WTC11 (cell line): ENCODE measurements at regions of chr3 and their contacts with region 1.

Region 1: GRCh38 chr3:192840143-192840836 is 77.4 kb downstream of the MB21D2 start:
- DNase-seq: no peak
- ATAC-seq: no peak
- H3K4me3 Mint-ChIP-seq: no peak overlapping the region
- H3K27ac Mint-ChIP-seq: no peak overlapping the region; the same call in 1 of the 2 replicates
- H3K4me1 Mint-ChIP-seq: peaks cover 73% of the 10 kb centered on the region
- H3K27me3 Mint-ChIP-seq: no peaks in the 10 kb centered on the region
- CTCF ChIP-seq: no peak

Region 2: DNA sequence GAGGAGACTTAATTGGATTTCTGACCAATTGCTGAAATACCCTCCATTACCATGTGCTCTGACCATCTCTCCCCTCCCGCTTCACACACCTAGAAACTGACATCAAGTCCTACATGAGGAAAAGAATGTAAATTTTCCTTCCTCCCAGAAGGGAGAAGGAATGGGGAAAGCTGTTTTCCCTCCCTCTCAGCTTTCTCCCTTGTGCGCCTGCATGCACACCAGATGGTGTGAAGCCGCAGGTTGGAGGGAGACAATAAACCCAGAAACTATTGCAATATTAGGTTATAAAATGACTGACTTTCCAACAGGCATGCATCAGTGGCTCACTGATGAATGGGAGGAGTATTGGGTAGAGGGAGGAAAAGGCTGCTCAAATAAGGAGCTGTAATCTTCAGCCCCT is 26.5 kb after region 1 on chr3:
- CTCF ChIA-PET with region 1: no interaction called
- POLR2A ChIA-PET with region 1: interaction called, 10 read pairs
- DNase-seq: no peak
- ATAC-seq: no peak
- H3K4me3 Mint-ChIP-seq: no peak overlapping the region
- H3K27ac Mint-ChIP-seq: peak overlapping the region; percentile 22; the same call in 1 of the 2 replicates
- H3K4me1 Mint-ChIP-seq: peaks cover 69% of the 10 kb centered on the region
- H3K27me3 Mint-ChIP-seq: no peaks in the 10 kb centered on the region
- CTCF ChIP-seq: no peak

Region 3: GRCh38 chr3:192879336-192880106 is 39.2 kb after region 1 on chr3:
- CTCF ChIA-PET with region 1: no interaction called
- POLR2A ChIA-PET with region 1: no interaction called
- DNase-seq: peak; percentile 53
- ATAC-seq: peak; percentile 92
- H3K4me3 Mint-ChIP-seq: peak overlapping the region; percentile 16; the same call in 1 of the 2 replicates
- H3K27ac Mint-ChIP-seq: peak overlapping the region; percentile 95
- H3K4me1 Mint-ChIP-seq: peaks cover 65% of the 10 kb centered on the region
- H3K27me3 Mint-ChIP-seq: no peaks in the 10 kb centered on the region
- CTCF ChIP-seq: no peak